Tibial artery (tissue), 4 donors: ENCODE measurements at regions of chr2 and their contacts with region 1.

Region 1: DNA sequence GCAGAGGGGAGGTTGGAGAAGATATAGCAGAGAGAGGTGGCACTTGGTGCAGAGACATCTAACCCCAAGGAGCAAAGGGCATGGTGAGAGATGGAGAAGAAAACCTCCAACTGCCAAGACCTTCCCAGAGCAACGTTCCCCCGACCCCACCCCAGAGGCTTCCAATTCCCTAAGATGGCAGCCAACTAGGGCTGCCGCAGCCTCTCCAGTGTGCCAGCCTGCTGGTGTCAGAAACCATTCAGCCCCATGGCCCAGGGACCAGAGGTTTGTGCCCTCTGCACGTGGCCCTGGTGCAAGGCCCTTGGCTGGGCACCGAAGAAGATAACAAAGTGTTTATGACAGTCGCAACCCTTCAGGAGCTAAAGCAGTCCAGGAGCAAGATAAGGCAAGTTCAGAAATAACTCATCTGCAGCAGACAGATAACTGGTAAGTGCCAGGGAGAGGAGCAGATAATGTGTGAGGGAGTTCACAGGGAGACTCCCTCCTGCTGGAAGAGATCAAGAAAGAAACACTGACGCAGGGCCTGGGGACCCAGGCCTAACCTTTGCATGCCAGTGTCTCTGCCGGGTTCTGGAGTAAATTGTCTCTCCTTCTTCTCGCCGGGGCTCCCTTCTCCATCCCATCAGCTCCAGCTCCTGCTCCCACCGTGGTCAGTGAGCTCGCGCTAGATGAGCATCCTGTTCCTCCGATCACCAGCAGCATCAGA is 66.1 kb upstream of the ID2 start:
- DNase-seq: no peak
- H3K4me3 ChIP-seq: no peak overlapping the region
- H3K27ac ChIP-seq: no peak overlapping the region
- H3K4me1 ChIP-seq: no peaks in the 10 kb centered on the region
- H3K27me3 ChIP-seq: no peaks in the 10 kb centered on the region
- CTCF ChIP-seq: no peak

Region 2: DNA sequence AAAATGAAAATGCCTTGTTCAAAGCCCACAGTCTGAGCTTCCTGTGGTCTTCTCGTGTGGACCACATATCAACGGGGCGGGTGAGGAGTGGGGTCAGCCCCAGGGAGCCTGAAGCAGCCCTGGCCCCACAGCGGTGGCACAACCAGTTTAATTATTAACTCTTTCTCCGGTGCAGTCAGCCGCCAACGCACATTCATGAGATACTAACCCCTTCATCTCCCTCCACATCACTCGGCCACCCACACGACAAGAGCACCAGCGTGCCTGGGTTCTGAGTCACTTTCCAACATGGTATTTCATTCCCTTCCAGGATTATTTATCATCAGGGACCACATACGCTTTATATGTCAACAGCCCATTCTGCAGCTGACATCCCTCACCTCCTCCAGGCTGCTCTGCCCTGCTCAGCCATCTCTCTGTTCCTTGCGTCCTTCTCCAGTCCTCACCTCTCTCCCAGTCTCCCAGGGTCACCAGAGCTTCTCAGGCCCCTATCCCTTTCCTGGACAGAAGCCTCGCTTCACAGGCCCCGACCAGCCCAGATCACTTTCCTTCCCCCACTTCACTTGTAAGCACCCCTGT is 18.1 kb after region 1 on chr2:
- intact Hi-C with region 1: no loop called
- DNase-seq: no peak
- H3K4me3 ChIP-seq: no peak overlapping the region
- H3K27ac ChIP-seq: no peak overlapping the region
- H3K4me1 ChIP-seq: peaks cover 0 to 7% (median 0%) of the 10 kb centered on the region in 4 donors
- H3K27me3 ChIP-seq: no peaks in the 10 kb centered on the region
- CTCF ChIP-seq: no peak

Region 3: GRCh38 chr2:10239561-10239967 is 1623.8 kb after region 1 on chr2:
- intact Hi-C with region 1: loop called (anchors 5 kb)
- DNase-seq: peak in 1 of 2 donors; percentile 56
- H3K4me3 ChIP-seq: no peak overlapping the region
- H3K27ac ChIP-seq: no peak overlapping the region
- H3K4me1 ChIP-seq: no peaks in the 10 kb centered on the region
- H3K27me3 ChIP-seq: peaks cover 0 to 21% of the 10 kb centered on the region in 2 donors
- CTCF ChIP-seq: no peak